GM10248 (cell line): ENCODE measurements at regions of chr3 and their contacts with region 1.

Region 1: GRCh38 chr3:124761250-124761796 is 31.1 kb downstream of the UMPS start:
- DNase-seq: peak; percentile 81
- CTCF ChIP-seq: peak; percentile 89

Region 2: GRCh38 chr3:124741027-124741426 is 20.3 kb before region 1 on chr3:
- CTCF ChIA-PET with region 1: interaction called, 16 read pairs
- POLR2A ChIA-PET with region 1: no interaction called
- DNase-seq: no peak
- CTCF ChIP-seq: no peak

Region 3: GRCh38 chr3:124780761-124781475 is 19.6 kb after region 1 on chr3:
- CTCF ChIA-PET with region 1: interaction called, 34 read pairs
- POLR2A ChIA-PET with region 1: no interaction called
- DNase-seq: no peak
- CTCF ChIP-seq: no peak

Region 4: GRCh38 chr3:124895756-124896155 is 134.4 kb after region 1 on chr3:
- CTCF ChIA-PET with region 1: interaction called, 215 read pairs
- POLR2A ChIA-PET with region 1: no interaction called
- DNase-seq: no peak
- CTCF ChIP-seq: no peak